B cell (primary cell): ENCODE measurements at regions of chr6 and their contacts with region 1.

Region 1: DNA sequence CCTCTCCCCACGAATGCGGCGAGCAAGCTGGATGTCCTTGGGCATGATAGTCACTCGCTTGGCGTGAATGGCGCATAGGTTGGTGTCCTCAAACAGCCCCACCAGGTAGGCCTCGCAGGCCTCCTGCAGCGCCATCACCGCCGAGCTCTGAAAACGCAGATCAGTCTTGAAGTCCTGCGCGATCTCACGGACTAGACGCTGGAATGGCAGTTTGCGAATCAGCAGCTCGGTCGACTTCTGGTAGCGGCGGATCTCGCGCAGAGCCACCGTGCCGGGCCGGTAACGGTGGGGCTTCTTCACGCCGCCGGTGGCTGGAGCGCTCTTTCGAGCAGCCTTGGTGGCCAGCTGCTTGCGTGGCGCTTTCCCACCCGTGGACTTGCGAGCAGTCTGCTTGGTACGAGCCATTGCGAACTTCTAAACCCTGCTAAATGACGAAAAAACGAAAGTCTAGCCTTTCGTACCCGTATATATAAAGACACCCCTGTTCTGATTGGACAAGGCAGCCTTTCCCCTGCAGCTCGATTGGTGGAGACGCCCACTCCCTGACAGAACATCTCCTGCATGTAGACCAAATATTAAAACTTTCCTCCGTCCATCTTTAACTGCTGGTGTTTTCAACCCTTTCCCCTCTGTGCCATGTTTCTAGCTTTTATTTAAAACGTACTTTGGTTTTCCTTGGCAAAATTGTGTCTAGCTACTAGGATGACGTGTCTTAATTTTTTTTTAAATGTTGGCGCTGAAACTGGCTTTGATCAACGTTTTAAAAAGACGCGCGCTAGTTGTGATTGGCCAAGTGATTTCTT is 109.8 kb downstream of the HFE start:
- DNase-seq: peak; percentile 95
- ATAC-seq: peak; percentile 55
- H3K4me3 ChIP-seq: peak overlapping the region; percentile 78 to 100 (median 90)
- H3K4me3 Mint-ChIP-seq: peak overlapping the region; percentile 91
- H3K27ac ChIP-seq: peak overlapping the region; percentile 78 to 95
- H3K27ac Mint-ChIP-seq: peak overlapping the region; percentile 96
- H3K4me1 ChIP-seq: peaks cover 16 to 31% of the 10 kb centered on the region in 2 donors
- H3K4me1 Mint-ChIP-seq: peaks cover 41% of the 10 kb centered on the region
- H3K27me3 ChIP-seq: no peaks in the 10 kb centered on the region
- H3K27me3 Mint-ChIP-seq: no peaks in the 10 kb centered on the region
- CTCF ChIP-seq: no peak

Region 2: GRCh38 chr6:26054857-26055669 is 142.0 kb before region 1 on chr6:
- CTCF ChIA-PET with region 1: interaction called, 3 read pairs
- POLR2A ChIA-PET with region 1: interaction called, 36 read pairs
- intact Hi-C with region 1: no loop called
- DNase-seq: peak; percentile 93
- ATAC-seq: peak; percentile 65
- H3K4me3 ChIP-seq: peak overlapping the region; percentile 69 to 100 (median 94)
- H3K4me3 Mint-ChIP-seq: peak overlapping the region; percentile 96
- H3K27ac ChIP-seq: peak overlapping the region; percentile 80 to 91
- H3K27ac Mint-ChIP-seq: peak overlapping the region; percentile 97
- H3K4me1 ChIP-seq: peaks cover 12 to 16% of the 10 kb centered on the region in 2 donors
- H3K4me1 Mint-ChIP-seq: peaks cover 15% of the 10 kb centered on the region
- H3K27me3 ChIP-seq: no peaks in the 10 kb centered on the region
- H3K27me3 Mint-ChIP-seq: no peaks in the 10 kb centered on the region
- CTCF ChIP-seq: no peak

Region 3: DNA sequence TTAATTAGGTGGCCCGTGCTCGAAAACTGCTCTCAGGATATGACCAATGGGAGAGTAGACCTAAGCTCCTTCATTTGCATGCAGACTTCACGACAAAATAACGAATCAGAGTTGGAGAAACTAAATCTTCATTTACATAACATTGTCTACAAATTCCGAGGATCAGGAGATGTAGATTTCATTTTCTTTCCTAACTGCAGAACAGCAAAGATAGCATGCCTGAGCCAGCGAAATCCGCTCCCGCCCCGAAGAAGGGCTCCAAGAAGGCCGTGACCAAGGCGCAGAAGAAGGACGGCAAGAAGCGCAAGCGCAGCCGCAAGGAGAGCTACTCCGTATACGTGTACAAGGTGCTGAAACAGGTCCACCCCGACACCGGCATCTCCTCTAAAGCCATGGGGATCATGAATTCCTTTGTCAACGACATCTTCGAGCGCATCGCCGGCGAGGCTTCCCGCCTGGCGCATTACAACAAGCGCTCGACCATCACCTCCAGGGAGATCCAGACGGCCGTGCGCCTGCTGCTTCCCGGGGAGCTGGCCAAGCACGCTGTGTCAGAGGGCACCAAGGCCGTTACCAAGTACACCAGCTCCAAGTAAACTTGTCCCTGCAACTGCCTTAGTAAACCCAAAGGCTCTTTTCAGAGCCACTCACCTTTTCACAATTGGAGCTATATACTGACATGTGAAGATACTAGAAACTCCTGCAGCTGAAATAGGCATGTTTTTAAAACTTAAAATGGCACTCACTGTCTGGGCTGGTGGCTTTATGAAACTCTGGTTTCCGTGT is 13.3 kb before region 1 on chr6:
- CTCF ChIA-PET with region 1: interaction called, 29 read pairs
- POLR2A ChIA-PET with region 1: interaction called, 105 read pairs
- intact Hi-C with region 1: no loop called
- DNase-seq: peak; percentile 84
- ATAC-seq: peak; percentile 89
- H3K4me3 ChIP-seq: peak overlapping the region; percentile 51 to 73 (median 71)
- H3K4me3 Mint-ChIP-seq: peak overlapping the region; percentile 91
- H3K27ac ChIP-seq: peak overlapping the region in 1 of 2 donors; percentile 61
- H3K27ac Mint-ChIP-seq: peak overlapping the region; percentile 85
- H3K4me1 ChIP-seq: peaks cover 13 to 22% of the 10 kb centered on the region in 2 donors
- H3K4me1 Mint-ChIP-seq: peaks cover 25% of the 10 kb centered on the region
- H3K27me3 ChIP-seq: no peaks in the 10 kb centered on the region
- H3K27me3 Mint-ChIP-seq: no peaks in the 10 kb centered on the region
- CTCF ChIP-seq: no peak

Region 4: DNA sequence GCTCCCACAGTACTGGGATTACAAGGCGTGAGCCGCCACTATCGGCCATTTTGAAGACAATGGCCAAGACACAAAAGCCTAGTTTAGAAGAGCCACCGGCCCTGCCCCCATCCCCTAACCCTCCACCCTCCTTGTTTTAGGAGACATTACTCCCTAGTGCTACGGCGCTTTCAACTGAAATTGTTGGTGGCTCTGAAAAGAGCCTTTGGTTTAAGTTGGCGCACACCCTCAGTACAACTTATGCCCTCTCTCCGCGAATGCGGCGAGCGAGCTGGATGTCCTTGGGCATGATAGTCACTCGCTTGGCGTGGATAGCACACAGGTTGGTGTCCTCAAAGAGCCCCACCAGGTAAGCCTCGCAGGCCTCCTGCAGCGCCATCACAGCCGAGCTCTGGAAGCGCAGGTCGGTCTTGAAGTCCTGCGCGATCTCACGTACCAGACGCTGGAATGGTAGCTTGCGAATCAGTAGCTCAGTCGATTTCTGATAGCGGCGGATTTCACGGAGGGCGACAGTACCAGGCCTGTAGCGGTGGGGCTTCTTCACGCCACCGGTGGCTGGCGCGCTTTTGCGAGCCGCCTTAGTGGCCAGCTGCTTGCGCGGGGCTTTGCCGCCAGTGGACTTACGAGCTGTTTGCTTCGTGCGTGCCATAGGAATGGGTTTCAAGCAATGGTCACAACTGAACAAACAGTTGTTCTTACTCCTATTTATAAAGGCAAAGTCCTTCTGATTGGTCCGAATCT is 53.1 kb after region 1 on chr6:
- CTCF ChIA-PET with region 1: interaction called, 20 read pairs
- POLR2A ChIA-PET with region 1: interaction called, 49 read pairs
- intact Hi-C with region 1: no loop called
- DNase-seq: peak; percentile 88
- ATAC-seq: peak; percentile 67
- H3K4me3 ChIP-seq: peak overlapping the region; percentile 68 to 90 (median 83)
- H3K4me3 Mint-ChIP-seq: peak overlapping the region; percentile 97
- H3K27ac ChIP-seq: peak overlapping the region; percentile 73 to 74
- H3K27ac Mint-ChIP-seq: peak overlapping the region; percentile 97
- H3K4me1 ChIP-seq: peaks cover 8 to 16% of the 10 kb centered on the region in 2 donors
- H3K4me1 Mint-ChIP-seq: peaks cover 43% of the 10 kb centered on the region
- H3K27me3 ChIP-seq: no peaks in the 10 kb centered on the region
- H3K27me3 Mint-ChIP-seq: no peaks in the 10 kb centered on the region
- CTCF ChIP-seq: peak; percentile 70

Region 5: DNA sequence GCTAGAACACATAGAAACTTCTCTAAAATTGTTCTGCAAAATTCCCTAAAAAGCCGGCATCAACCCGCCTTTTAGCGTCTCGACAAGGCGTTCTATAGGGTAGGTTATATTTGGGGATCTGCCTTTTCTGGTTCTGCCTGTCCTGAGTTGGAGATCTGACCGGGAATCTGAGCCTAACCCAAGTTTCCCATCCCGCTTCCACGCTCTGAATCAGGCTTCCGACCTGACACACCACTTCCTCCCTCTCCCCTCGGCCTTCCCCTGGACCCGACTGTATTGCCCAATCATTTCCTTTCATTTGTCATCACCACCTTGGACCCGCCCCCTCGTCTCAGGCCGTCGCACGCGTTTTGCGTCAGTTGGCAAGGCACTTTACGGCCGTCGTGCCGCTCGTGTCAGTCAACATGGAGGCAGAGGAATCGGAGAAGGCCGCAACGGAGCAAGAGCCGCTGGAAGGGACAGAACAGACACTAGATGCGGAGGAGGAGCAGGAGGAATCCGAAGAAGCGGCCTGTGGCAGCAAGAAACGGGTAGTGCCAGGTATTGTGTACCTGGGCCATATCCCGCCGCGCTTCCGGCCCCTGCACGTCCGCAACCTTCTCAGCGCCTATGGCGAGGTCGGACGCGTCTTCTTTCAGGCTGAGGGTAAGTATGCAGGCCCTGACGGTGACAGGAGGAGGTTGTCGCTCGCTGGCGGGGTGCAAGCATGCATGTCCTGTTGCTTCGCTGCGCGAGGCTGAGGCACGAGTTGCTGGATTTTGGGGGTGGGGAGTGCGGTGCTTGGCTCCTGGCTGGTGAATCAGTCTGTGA is 399.7 kb after region 1 on chr6 and contains the start of gene ABT1:
- CTCF ChIA-PET with region 1: interaction called, 11 read pairs
- POLR2A ChIA-PET with region 1: interaction called, 8 read pairs
- intact Hi-C with region 1: loop called (anchors 5 kb)
- DNase-seq: peak; percentile 98
- ATAC-seq: peak; percentile 93
- H3K4me3 ChIP-seq: peak within 1 kb of the TSS; percentile 84 to 99 (median 91)
- H3K4me3 Mint-ChIP-seq: no peak within 1 kb of the TSS
- H3K27ac ChIP-seq: peak within 1 kb of the TSS; percentile 88 to 89
- H3K27ac Mint-ChIP-seq: no peak within 1 kb of the TSS
- H3K4me1 ChIP-seq: peaks cover 14 to 24% of the 10 kb centered on the region in 2 donors
- H3K4me1 Mint-ChIP-seq: peaks cover 20% of the 10 kb centered on the region
- H3K27me3 ChIP-seq: peaks cover 2 to 20% (median 9%) of the 10 kb centered on the region in 4 experiments
- H3K27me3 Mint-ChIP-seq: peaks cover 8% of the 10 kb centered on the region
- CTCF ChIP-seq: no peak
- total RNA-seq, gene ABT1: 28.6 and 29.8 TPM in 2 replicates

Region 6: GRCh38 chr6:27838058-27838944 is 1641.3 kb after region 1 on chr6:
- CTCF ChIA-PET with region 1: interaction called, 4 read pairs
- POLR2A ChIA-PET with region 1: interaction called, 19 read pairs
- intact Hi-C with region 1: loop called (anchors 10 kb)
- DNase-seq: peak; percentile 98
- ATAC-seq: peak; percentile 80
- H3K4me3 ChIP-seq: peak overlapping the region; percentile 82 to 99 (median 90)
- H3K4me3 Mint-ChIP-seq: no peak overlapping the region
- H3K27ac ChIP-seq: peak overlapping the region; percentile 94 to 96
- H3K27ac Mint-ChIP-seq: no peak overlapping the region
- H3K4me1 ChIP-seq: peaks cover 28 to 29% of the 10 kb centered on the region in 2 donors
- H3K4me1 Mint-ChIP-seq: peaks cover 18% of the 10 kb centered on the region
- H3K27me3 ChIP-seq: peaks cover 0 to 4% (median 0%) of the 10 kb centered on the region in 4 experiments
- H3K27me3 Mint-ChIP-seq: no peaks in the 10 kb centered on the region
- CTCF ChIP-seq: no peak